Heart right ventricle (tissue), 16 donors: ENCODE measurements at regions of chr14 and their contacts with region 1.

Region 1: DNA sequence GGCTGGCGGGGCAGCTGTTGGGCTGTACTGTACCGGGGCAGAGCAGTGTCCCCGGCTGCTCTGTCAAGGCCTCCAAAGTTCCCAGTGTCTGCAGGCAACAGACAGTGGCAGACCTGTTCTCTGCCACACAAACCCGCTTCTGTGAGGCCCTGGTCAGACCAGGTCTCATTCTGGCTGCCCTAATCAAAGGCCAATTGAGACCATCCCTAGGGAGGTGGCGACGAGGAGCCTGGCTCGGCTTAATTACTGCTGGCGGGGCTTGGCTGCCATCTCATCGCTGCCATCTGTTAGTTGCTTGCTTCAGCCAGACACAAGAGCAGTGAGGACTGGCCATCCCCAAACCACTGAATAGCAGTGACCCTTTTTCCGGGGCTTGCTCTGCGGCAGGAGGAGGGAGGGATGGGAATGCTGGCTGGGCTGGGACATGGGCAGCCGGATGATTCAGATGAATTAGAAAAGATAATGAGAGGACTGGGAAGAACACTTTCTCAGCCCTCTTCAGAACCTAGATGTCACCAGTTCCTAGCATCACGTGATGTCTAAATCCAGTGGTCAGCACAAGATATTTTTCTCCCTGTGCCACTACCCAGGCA is 24.5 kb downstream of the ERG28 start:
- DNase-seq: no peak
- ATAC-seq: no peak
- H3K4me3 ChIP-seq: no peak overlapping the region
- H3K27ac ChIP-seq: no peak overlapping the region
- H3K4me1 ChIP-seq: peaks cover 0 to 6% (median 0%) of the 10 kb centered on the region in 9 donors
- H3K27me3 ChIP-seq: no peaks in the 10 kb centered on the region
- CTCF ChIP-seq: no peak

Region 2: DNA sequence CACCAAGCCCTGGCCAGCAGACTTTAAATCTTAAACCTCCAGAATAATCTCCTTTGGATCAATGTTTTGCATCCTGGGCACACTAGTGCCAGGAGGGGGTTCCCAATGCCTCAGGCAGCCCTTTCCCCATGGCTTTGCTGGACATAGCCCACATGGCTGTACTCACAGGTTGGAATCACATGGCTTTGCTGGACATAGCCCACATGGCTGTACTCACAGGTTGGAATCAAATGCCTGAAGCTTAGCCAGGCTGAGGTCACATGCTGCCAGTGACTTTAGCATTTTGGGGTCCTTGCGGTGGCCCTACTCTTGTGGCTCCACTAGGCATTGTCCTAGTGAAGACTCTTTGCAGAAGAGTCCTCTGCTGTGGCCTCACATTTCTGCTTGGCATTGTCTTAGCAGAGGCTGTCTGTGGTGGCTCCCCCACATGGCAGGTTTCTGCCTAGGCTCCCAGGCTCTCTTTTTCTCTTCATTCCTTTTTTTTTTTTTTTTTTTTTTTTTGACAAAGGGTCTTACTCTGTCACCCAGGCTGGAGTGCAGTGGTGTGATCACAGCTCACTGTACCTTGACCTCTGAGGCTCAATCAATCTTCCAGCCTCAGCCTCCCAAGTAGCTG is 44.8 kb before region 1 on chr14:
- intact Hi-C with region 1: loop called in 3 of 10 experiments (anchors 5 kb)
- DNase-seq: no peak
- ATAC-seq: peak in 1 of 8 donors; percentile 56
- H3K4me3 ChIP-seq: no peak overlapping the region
- H3K27ac ChIP-seq: no peak overlapping the region
- H3K4me1 ChIP-seq: peaks cover 0 to 27% (median 0%) of the 10 kb centered on the region in 9 donors
- H3K27me3 ChIP-seq: no peaks in the 10 kb centered on the region
- CTCF ChIP-seq: no peak